AG04450 (cell line): ENCODE measurements at regions of chr3 and their contacts with region 1.

Region 1: GRCh38 chr3:38644016-38644661 is 5.3 kb downstream of the SCN5A start:
- DNase-seq: no peak
- H3K4me3 ChIP-seq: no peak overlapping the region
- H3K27ac ChIP-seq: no peak overlapping the region
- H3K27me3 ChIP-seq: peaks cover 25% of the 10 kb centered on the region
- CTCF ChIP-seq: no peak

Region 2: DNA sequence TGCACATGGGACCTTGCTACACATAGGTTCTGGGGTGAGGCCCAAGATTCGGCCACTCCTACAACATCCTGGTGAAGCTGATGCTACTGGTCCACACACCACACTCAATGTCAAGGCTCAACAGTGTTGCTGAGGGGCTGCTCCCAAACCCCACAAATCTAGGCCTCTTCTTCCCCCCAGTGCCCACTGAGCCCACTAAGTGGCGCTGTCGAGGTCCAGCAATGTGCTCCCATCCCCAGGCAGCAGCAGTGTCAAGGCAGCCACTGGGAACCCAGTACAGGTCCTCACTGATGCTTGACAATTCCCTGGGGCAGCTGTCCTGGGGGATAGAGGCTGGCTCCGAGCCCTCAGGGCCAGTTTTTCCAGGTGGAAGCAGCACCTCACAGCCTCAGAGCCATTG is 16.2 kb before region 1 on chr3:
- CTCF ChIA-PET with region 1: no interaction called
- POLR2A ChIA-PET with region 1: no interaction called
- DNase-seq: no peak
- H3K4me3 ChIP-seq: no peak overlapping the region
- H3K27ac ChIP-seq: no peak overlapping the region
- H3K27me3 ChIP-seq: peaks cover 2% of the 10 kb centered on the region
- CTCF ChIP-seq: peak; percentile 39

Region 3: GRCh38 chr3:38662544-38662943 is 18.4 kb after region 1 on chr3:
- CTCF ChIA-PET with region 1: interaction called, 13 read pairs
- POLR2A ChIA-PET with region 1: no interaction called
- DNase-seq: no peak
- H3K4me3 ChIP-seq: no peak overlapping the region
- H3K27ac ChIP-seq: no peak overlapping the region
- H3K27me3 ChIP-seq: peaks cover 17% of the 10 kb centered on the region
- CTCF ChIP-seq: peak; percentile 45